ENCODE measurements at regions of chr3 and their contacts with region 1.

Region 1: DNA sequence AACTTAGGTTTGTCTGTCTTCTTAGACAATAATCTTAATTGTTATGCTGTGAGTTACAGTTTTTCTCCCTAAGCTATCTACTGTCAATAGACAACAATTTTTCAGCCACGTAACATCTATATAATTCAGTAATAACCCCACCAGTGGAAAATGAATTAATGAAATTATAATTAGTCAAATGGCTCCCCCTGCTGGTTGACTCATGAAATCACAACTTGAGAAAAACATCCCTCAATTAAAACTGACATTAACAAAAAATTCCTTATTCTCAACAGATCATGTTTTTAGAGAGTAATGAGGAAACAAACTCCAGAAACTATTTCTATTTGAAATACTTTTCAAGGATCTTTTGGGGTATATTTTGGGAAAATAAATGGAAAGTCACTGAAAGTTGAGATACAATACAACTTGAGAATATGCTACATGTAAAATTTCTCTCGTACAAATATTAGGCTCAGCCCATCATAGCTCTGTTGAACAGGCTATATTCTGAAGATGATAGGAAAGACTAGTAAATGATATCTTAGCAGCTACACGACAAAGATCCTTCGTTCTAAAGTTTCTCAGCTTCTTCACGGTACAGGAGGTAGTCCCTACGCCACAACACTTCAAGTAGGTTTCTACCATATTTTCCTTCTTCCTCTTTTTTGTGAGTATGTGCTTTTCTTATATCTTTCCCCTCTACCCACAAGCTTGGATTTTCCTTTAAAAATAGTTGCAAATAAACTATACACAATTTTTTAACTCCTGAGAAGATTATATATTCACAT is 20.7 kb downstream of the PPP1R2 start:
- DNase-seq: peak; percentile 26
- H3K4me3 ChIP-seq: no peak overlapping the region
- H3K27ac ChIP-seq: no peak overlapping the region
- H3K4me1 ChIP-seq: no peaks in the 10 kb centered on the region
- H3K27me3 ChIP-seq: no peaks in the 10 kb centered on the region
- CTCF ChIP-seq: peak; percentile 79

Region 2: GRCh38 chr3:195271116-195271858 is 251.2 kb before region 1 on chr3 and contains the start of gene XXYLT1:
- intact Hi-C with region 1: loop called (anchors 1 kb)
- DNase-seq: peak; percentile 94
- H3K4me3 ChIP-seq: peak within 1 kb of the TSS; percentile 70
- H3K27ac ChIP-seq: peak within 1 kb of the TSS; percentile 95
- H3K4me1 ChIP-seq: peaks cover 16% of the 10 kb centered on the region
- H3K27me3 ChIP-seq: no peaks in the 10 kb centered on the region
- CTCF ChIP-seq: peak; percentile 95
- total RNA-seq, gene XXYLT1: 8.3 to 10.9 TPM

Region 3: DNA sequence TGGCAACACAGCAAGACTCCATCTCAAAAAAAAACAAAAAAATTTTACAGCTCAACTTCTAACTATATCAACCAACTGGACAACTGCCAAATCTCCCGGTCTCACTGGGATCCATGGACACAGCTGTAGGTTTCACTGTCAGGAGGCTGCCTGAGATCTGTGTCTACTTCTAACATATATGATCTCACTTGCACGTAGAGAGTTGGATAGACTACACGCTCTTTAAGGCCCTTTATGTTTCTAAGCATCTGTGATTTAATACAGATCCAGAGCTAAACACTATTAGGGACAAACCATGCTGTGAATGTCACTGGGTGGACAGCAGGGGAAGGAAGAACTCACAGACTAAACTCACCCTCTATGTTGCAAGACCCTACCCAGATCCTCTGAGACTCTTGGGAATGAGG is 74.3 kb after region 1 on chr3:
- intact Hi-C with region 1: no loop called
- DNase-seq: no peak
- H3K4me3 ChIP-seq: no peak overlapping the region
- H3K27ac ChIP-seq: no peak overlapping the region
- H3K4me1 ChIP-seq: no peaks in the 10 kb centered on the region
- H3K27me3 ChIP-seq: no peaks in the 10 kb centered on the region
- CTCF ChIP-seq: no peak

Region 4: GRCh38 chr3:196136026-196136984 is 613.9 kb after region 1 on chr3:
- intact Hi-C with region 1: no loop called
- DNase-seq: no peak
- H3K4me3 ChIP-seq: no peak overlapping the region
- H3K27ac ChIP-seq: no peak overlapping the region
- H3K4me1 ChIP-seq: no peaks in the 10 kb centered on the region
- H3K27me3 ChIP-seq: no peaks in the 10 kb centered on the region
- CTCF ChIP-seq: no peak

Measured in colonic mucosa (tissue), 4 donors.